Endothelial cell of umbilical vein (primary cell): ENCODE measurements at regions of chr18 and their contacts with region 1.

Region 1: DNA sequence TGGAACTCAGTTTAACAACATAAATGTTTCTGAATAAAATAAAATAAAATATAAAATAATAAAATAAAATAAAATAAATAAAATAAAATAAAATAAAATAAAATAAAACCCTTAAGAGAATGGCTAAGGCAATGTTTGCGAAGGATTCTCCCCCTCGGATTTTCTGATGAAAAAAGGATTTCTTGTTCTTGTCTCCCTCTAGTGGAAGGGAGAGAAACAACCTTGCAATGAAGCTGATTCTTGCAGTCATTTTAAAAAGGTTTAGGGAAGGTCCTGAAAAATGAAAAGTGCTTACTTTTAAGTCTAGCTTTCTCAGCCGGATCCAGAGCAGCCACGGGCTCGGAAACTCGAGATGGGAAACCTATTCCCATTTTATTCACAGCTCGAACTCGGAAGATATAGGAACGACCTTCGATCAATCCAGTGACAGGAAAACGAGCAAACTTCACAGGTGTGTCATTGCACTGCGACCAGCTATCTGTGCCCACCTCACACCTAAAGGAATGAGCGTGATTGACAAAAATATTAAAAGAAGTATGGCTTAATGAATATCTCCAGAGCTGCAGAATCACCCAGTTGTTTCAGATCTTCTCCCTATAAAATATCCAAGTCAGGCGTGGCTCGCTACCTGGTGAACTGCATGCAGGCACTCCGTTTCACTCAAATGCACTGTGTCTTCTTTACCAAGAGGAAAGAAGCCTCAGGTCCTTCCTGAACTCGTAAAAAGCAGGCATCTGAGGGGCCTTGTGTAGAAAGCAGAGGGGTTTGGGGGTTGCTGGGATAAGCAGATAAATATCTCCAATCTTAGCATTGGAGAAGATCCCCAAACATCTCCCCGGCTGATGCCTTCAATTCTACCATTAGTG is 68.1 kb downstream of the MYOM1 start:
- DNase-seq: peak; percentile 35
- H3K4me3 ChIP-seq: no peak overlapping the region
- H3K27ac ChIP-seq: no peak overlapping the region
- H3K4me1 ChIP-seq: peaks cover 12% of the 10 kb centered on the region
- H3K27me3 ChIP-seq: no peaks in the 10 kb centered on the region
- CTCF ChIP-seq: peak; percentile 54
- POLR2A ChIP-seq: no peak

Region 2: GRCh38 chr18:2874765-2875164 is 276.9 kb before region 1 on chr18:
- CTCF ChIA-PET with region 1: no interaction called
- POLR2A ChIA-PET with region 1: no interaction called
- dilution Hi-C with region 1: no loop called
- intact Hi-C with region 1: no loop called
- DNase-seq: no peak
- H3K4me3 ChIP-seq: no peak overlapping the region
- H3K27ac ChIP-seq: no peak overlapping the region
- H3K4me1 ChIP-seq: no peaks in the 10 kb centered on the region
- H3K27me3 ChIP-seq: peaks cover 0 to 4% of the 10 kb centered on the region in 2 experiments
- CTCF ChIP-seq: no peak
- POLR2A ChIP-seq: no peak

Region 3: GRCh38 chr18:2932247-2933181 is 219.1 kb before region 1 on chr18:
- CTCF ChIA-PET with region 1: interaction called, 23 read pairs
- POLR2A ChIA-PET with region 1: no interaction called
- dilution Hi-C with region 1: no loop called
- intact Hi-C with region 1: loop called (anchors 1 kb)
- DNase-seq: peak; percentile 64
- H3K4me3 ChIP-seq: no peak overlapping the region
- H3K27ac ChIP-seq: no peak overlapping the region
- H3K4me1 ChIP-seq: no peaks in the 10 kb centered on the region
- H3K27me3 ChIP-seq: no peaks in the 10 kb centered on the region
- CTCF ChIP-seq: peak; percentile 44 to 48
- POLR2A ChIP-seq: no peak

Region 4: GRCh38 chr18:2985628-2986027 is 166.0 kb before region 1 on chr18:
- CTCF ChIA-PET with region 1: interaction called, 16 read pairs
- POLR2A ChIA-PET with region 1: no interaction called
- dilution Hi-C with region 1: no loop called
- intact Hi-C with region 1: loop called (anchors 5 kb)
- DNase-seq: peak; percentile 48
- H3K4me3 ChIP-seq: no peak overlapping the region
- H3K27ac ChIP-seq: no peak overlapping the region
- H3K4me1 ChIP-seq: peaks cover 49% of the 10 kb centered on the region
- H3K27me3 ChIP-seq: no peaks in the 10 kb centered on the region
- CTCF ChIP-seq: peak; percentile 26 to 39
- POLR2A ChIP-seq: no peak

Region 5: GRCh38 chr18:3012964-3013804 is 138.4 kb before region 1 on chr18 and contains the start of gene LPIN2:
- CTCF ChIA-PET with region 1: interaction called, 16 read pairs
- POLR2A ChIA-PET with region 1: no interaction called
- dilution Hi-C with region 1: no loop called
- intact Hi-C with region 1: loop called (anchors 2 kb)
- DNase-seq: peak; percentile 98
- H3K4me3 ChIP-seq: peak within 1 kb of the TSS; percentile 74 to 96 (median 94)
- H3K27ac ChIP-seq: peak within 1 kb of the TSS; percentile 90
- H3K4me1 ChIP-seq: peaks cover 67% of the 10 kb centered on the region
- H3K27me3 ChIP-seq: no peaks in the 10 kb centered on the region
- CTCF ChIP-seq: no peak
- POLR2A ChIP-seq: peak; percentile 61
- total RNA-seq, gene LPIN2: 21.8 and 24.4 TPM in 2 replicates

Region 6: GRCh38 chr18:3027370-3027891 is 124.2 kb before region 1 on chr18:
- CTCF ChIA-PET with region 1: no interaction called
- POLR2A ChIA-PET with region 1: no interaction called
- dilution Hi-C with region 1: no loop called
- intact Hi-C with region 1: no loop called
- DNase-seq: no peak
- H3K4me3 ChIP-seq: no peak overlapping the region
- H3K27ac ChIP-seq: no peak overlapping the region
- H3K4me1 ChIP-seq: peaks cover 9% of the 10 kb centered on the region
- H3K27me3 ChIP-seq: no peaks in the 10 kb centered on the region
- CTCF ChIP-seq: no peak
- POLR2A ChIP-seq: no peak

Region 7: GRCh38 chr18:3162181-3162580 is 10.5 kb after region 1 on chr18:
- CTCF ChIA-PET with region 1: interaction called, 29 read pairs
- POLR2A ChIA-PET with region 1: no interaction called
- dilution Hi-C with region 1: no loop called
- intact Hi-C with region 1: no loop called
- DNase-seq: no peak
- H3K4me3 ChIP-seq: no peak overlapping the region
- H3K27ac ChIP-seq: no peak overlapping the region
- H3K4me1 ChIP-seq: no peaks in the 10 kb centered on the region
- H3K27me3 ChIP-seq: no peaks in the 10 kb centered on the region
- CTCF ChIP-seq: no peak
- POLR2A ChIP-seq: no peak

Region 8: GRCh38 chr18:3207565-3207964 is 55.9 kb after region 1 on chr18:
- CTCF ChIA-PET with region 1: interaction called, 10 read pairs
- POLR2A ChIA-PET with region 1: no interaction called
- dilution Hi-C with region 1: no loop called
- intact Hi-C with region 1: no loop called
- DNase-seq: no peak
- H3K4me3 ChIP-seq: no peak overlapping the region
- H3K27ac ChIP-seq: no peak overlapping the region
- H3K4me1 ChIP-seq: no peaks in the 10 kb centered on the region
- H3K27me3 ChIP-seq: peaks cover 0 to 8% of the 10 kb centered on the region in 2 experiments
- CTCF ChIP-seq: no peak
- POLR2A ChIP-seq: no peak